Prostate gland (tissue), 2 donors: ENCODE measurements at regions of chr2 and their contacts with region 1.

Region 1: DNA sequence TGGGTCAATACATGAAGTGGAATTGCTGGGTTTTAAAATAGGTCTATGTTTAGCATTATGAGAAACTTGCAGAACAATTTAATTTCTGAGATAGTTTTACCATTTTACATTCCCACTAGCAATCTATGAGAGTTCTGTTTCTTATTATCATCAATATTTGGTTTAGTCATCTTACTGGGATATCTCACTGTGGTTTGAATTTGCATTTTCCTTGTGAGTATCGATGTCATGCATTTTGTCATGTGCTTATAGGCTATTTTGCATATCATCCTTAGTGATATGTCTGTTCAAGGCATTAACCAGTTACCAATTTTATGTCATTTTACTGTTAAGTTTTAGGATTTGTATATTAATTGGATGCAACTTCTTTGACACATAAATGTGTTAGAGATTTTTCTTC is 204.4 kb downstream of the MCFD2 start:
- DNase-seq: no peak
- H3K4me3 ChIP-seq: no peak overlapping the region
- H3K27ac ChIP-seq: no peak overlapping the region
- H3K4me1 ChIP-seq: peaks cover 2% of the 10 kb centered on the region
- H3K27me3 ChIP-seq: no peaks in the 10 kb centered on the region
- CTCF ChIP-seq: no peak
- POLR2A ChIP-seq: no peak

Region 2: GRCh38 chr2:46650556-46651001 is 60.6 kb before region 1 on chr2:
- intact Hi-C with region 1: loop called (anchors 5 kb)
- DNase-seq: peak; percentile 84
- H3K4me3 ChIP-seq: no peak overlapping the region
- H3K27ac ChIP-seq: no peak overlapping the region
- H3K4me1 ChIP-seq: no peaks in the 10 kb centered on the region
- H3K27me3 ChIP-seq: no peaks in the 10 kb centered on the region
- CTCF ChIP-seq: peak; percentile 93 to 98 (median 95)
- POLR2A ChIP-seq: no peak